ENCODE measurements at regions of chr17 and their contacts with region 1.

Region 1: GRCh38 chr17:10968007-10968406 is 130.1 kb upstream of the PIRT start:
- DNase-seq: no peak
- ATAC-seq: no peak

Region 2: GRCh38 chr17:10920558-10921108 is 47.4 kb before region 1 on chr17:
- intact Hi-C with region 1: loop called (anchors 1 kb)
- DNase-seq: no peak
- ATAC-seq: no peak

Measured in sciatic nerve (tissue), 2 donors.